AG04450 (cell line): ENCODE measurements at regions of chr11 and their contacts with region 1.

Region 1: DNA sequence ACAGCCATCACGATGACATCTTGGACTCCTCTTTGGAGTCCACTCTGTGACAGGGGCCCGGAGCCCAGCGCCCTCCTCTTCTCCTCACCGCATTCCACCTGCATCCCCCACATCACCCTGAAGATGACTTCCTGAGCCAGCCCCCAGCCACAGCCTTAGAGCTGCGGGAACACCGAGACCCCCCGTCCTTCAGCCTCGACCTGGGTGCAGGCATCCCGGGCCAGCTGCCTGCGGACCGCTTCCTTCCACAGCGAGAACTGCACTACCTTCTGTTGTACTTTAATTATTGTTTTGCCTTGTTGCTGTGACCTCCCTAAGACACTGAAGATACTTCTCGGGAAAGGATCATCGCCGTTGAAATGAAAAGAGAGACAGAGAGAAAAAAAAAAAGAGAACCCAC is 42.1 kb downstream of the DBX1 start:
- DNase-seq: no peak
- H3K4me3 ChIP-seq: no peak overlapping the region
- H3K27ac ChIP-seq: no peak overlapping the region
- H3K27me3 ChIP-seq: no peaks in the 10 kb centered on the region
- CTCF ChIP-seq: no peak

Region 2: GRCh38 chr11:20177136-20177535 is 58.9 kb after region 1 on chr11:
- CTCF ChIA-PET with region 1: no interaction called
- POLR2A ChIA-PET with region 1: interaction called, 11 read pairs
- DNase-seq: no peak
- H3K4me3 ChIP-seq: no peak overlapping the region
- H3K27ac ChIP-seq: no peak overlapping the region
- H3K27me3 ChIP-seq: peaks cover 3% of the 10 kb centered on the region
- CTCF ChIP-seq: no peak